Ascending aorta (tissue), 2 donors: ENCODE measurements at regions of chr14 and their contacts with region 1.

Region 1: DNA sequence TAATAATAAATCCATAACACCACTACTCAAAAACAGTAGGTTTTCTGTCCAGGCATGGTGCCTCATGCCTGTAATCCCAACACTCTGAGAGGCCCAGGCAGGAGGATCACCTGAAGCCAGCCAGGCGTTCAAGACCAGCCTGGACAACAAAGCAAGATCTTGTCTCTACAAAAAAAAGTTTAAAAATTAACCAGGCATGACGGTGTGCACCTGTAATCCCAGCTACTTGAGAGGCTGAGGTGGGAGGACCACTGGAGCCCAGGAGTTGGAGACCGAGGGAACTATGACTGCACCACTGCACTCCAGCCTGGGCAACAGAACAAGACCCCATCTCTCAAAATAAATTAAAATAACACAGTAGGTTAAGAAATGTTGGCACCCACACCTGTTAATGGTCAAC is 44.5 kb upstream of the AP4S1 start:
- DNase-seq: no peak
- H3K4me3 ChIP-seq: no peak overlapping the region
- H3K27ac ChIP-seq: peak overlapping the region in 1 of 2 donors; percentile 11
- H3K4me1 ChIP-seq: peaks cover 0 to 15% of the 10 kb centered on the region in 2 donors
- H3K27me3 ChIP-seq: no peaks in the 10 kb centered on the region
- CTCF ChIP-seq: no peak

Region 2: GRCh38 chr14:31080055-31080454 is 99.1 kb after region 1 on chr14:
- intact Hi-C with region 1: loop called (anchors 2 kb)
- DNase-seq: no peak
- H3K4me3 ChIP-seq: no peak overlapping the region
- H3K27ac ChIP-seq: no peak overlapping the region
- H3K4me1 ChIP-seq: peaks cover 0 to 16% of the 10 kb centered on the region in 2 donors
- H3K27me3 ChIP-seq: no peaks in the 10 kb centered on the region
- CTCF ChIP-seq: no peak

Region 3: GRCh38 chr14:31207755-31208545 is 227.0 kb after region 1 on chr14 and contains the start of gene HECTD1:
- intact Hi-C with region 1: no loop called
- DNase-seq: peak; percentile 15 to 93
- H3K4me3 ChIP-seq: peak within 1 kb of the TSS; percentile 82 to 98
- H3K27ac ChIP-seq: peak within 1 kb of the TSS; percentile 98 to 100
- H3K4me1 ChIP-seq: peaks cover 7 to 22% of the 10 kb centered on the region in 2 donors
- H3K27me3 ChIP-seq: no peaks in the 10 kb centered on the region
- CTCF ChIP-seq: peak; percentile 22 to 89 (median 37)
- total RNA-seq, gene HECTD1: 63.6 TPM